ENCODE measurements at regions of chr3 and their contacts with region 1.

Region 1: DNA sequence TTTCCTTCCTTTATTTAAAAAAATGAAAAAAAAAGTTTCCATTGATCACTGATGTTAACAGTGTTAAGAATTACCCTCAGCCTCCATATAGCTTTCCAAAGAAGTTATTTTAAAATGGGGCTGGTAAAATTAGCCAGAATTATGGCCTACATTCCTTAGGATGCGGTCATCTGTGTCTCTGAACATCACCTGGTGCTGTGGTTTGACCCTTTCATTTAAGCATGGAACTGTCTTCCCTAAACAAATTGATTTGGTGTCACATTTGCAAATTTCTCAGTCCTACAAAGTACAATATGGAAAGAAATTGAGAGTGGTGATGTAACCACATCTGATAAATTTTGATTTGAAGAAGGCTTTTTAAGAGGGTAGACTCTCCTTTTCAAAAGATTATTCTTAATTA is 40.3 kb upstream of the ZPLD1 start:
- DNase-seq: no peak
- H3K27ac ChIP-seq: no peak overlapping the region
- CTCF ChIP-seq: no peak

Region 2: DNA sequence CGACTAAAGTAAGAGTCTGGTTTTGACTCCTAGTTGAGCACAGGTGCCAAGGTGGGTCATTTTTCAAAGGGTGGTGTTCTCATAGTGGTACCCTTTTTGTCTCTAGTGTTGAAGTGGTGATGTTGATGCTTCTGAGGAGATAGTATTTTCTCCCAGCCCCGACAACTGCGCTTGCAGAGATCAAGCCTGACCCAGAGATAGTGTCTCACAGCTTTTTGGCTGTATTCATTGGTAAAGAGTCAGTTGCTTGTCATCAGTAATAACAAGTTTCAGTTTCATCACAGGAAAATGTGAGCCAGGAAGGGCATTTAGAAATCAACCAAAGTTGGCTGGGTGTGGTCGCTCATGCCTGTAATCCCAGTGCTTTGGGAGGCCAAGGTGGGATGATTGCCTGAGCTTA is 405.9 kb before region 1 on chr3:
- CTCF ChIA-PET with region 1: interaction called, 10 read pairs
- POLR2A ChIA-PET with region 1: no interaction called
- DNase-seq: no peak
- H3K27ac ChIP-seq: no peak overlapping the region
- CTCF ChIP-seq: no peak

Measured in RWPE1 (cell line).